Left ventricle myocardium inferior (tissue), 1 donor: ENCODE measurements at regions of chr14 and their contacts with region 1.

Region 1: GRCh38 chr14:89767861-89768268 is 186.7 kb downstream of the EFCAB11 start:
- DNase-seq: no peak
- H3K4me3 ChIP-seq: no peak overlapping the region
- H3K27ac ChIP-seq: no peak overlapping the region
- H3K4me1 ChIP-seq: peaks cover 10% of the 10 kb centered on the region
- H3K27me3 ChIP-seq: peaks cover under 1% of the 10 kb centered on the region
- CTCF ChIP-seq: peak; percentile 75

Region 2: DNA sequence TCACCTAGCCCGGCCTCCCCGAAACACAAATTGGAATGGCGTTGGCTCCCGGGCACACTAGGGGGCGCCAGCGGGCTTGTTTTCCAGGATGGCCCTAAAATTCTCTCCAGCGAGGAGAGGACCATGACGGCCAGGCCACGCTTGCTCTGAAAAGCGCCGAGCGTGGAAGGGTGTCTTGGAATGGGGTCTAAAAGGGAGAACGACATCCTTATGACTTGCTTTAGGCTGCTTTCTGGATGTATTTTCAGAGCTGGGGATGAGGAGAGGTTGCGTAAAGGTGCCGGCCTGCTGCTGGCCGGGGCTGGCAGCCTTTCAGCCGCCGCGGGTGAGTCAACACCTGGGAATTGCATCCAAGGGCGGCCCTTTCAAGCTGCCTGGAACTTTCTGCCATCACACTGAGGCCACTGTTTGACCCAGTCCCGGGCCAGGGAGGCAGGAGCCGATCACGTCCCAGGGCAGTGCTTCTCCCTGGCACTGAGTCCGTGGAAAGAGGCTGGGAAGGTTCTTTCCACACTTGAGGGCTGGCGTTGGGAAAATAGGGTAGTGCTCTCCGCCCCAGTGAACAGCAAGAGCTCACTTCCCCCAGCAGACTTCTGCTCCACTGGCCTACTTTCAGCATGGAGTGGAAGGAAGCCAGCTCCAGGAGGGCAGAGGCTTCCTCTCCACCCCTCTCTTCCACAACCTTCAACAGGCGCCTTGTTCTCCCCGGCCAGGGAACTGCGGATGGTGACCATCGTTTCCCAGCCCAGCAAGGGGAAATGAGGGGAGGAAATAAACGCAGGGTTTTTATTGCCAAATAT is 727.2 kb before region 1 on chr14:
- intact Hi-C with region 1: loop called (anchors 10 kb)
- DNase-seq: peak; percentile 88
- H3K4me3 ChIP-seq: peak overlapping the region; percentile 66
- H3K27ac ChIP-seq: peak overlapping the region; percentile 86
- H3K4me1 ChIP-seq: peaks cover 9% of the 10 kb centered on the region
- H3K27me3 ChIP-seq: peaks cover 4% of the 10 kb centered on the region
- CTCF ChIP-seq: peak; percentile 96

Region 3: DNA sequence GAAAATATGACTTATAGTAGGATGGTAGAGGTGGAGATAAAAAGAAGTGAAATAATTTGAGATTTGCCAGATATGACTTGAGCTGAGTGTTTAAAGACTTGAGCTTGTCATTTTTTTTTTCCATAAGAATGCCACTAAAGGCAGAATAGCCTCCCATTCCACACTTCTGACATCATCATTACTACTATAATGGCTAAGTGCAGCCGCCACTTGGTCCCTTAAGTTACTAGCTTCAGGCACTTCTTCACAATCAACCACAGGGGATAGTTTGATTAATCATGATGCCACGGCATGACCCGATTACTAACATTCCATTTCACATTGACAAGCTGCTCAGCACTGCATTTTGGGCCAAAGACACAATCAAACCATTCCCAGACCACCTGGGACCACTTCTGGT is 58.7 kb after region 1 on chr14:
- intact Hi-C with region 1: no loop called
- DNase-seq: no peak
- H3K4me3 ChIP-seq: no peak overlapping the region
- H3K27ac ChIP-seq: no peak overlapping the region
- H3K4me1 ChIP-seq: no peaks in the 10 kb centered on the region
- H3K27me3 ChIP-seq: no peaks in the 10 kb centered on the region
- CTCF ChIP-seq: no peak